ENCODE measurements at regions of chr7 and their contacts with region 1.

Region 1: GRCh38 chr7:24854866-24855265 is 97.6 kb upstream of the GSDME start:
- DNase-seq: no peak
- ATAC-seq: no peak
- H3K4me3 ChIP-seq: no peak overlapping the region
- H3K27ac ChIP-seq: no peak overlapping the region
- H3K4me1 ChIP-seq: no peaks in the 10 kb centered on the region
- H3K27me3 ChIP-seq: no peaks in the 10 kb centered on the region
- CTCF ChIP-seq: no peak

Region 2: DNA sequence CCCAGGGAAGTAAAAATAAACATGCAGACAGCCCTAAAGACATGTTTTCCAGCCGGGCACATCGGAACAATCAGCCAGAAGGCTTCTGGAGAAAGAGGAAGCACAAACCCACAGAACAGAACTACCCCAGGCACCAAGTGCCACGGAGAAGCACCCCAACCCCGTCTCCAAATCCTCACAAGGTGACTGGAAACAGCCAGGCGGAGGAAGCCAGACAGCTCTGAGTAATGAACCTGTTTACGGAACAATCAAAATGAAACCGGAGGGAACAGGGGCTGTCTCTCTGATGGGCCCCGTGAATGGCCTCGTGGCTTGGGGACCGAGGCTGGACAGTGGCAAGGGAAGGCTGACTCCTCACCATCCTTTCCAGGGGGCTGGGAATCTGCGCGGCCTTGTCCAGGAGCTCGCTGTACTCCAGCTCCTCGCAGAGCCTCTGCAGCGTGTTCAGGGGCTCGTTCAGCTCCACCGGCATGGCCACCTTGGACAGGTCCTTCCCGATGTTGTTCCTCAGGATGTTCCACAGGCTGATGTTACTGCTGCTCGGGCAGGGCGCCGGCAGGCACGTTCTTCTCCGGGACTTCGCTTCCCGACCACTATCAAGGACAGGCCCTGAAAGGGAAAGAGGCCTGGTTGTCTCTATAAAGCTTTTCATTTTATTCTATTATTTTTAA is 20.6 kb before region 1 on chr7:
- CTCF ChIA-PET with region 1: no interaction called
- POLR2A ChIA-PET with region 1: no interaction called
- in situ Hi-C with region 1: no loop called
- intact Hi-C with region 1: loop called (anchors 2 kb)
- DNase-seq: no peak
- ATAC-seq: no peak
- H3K4me3 ChIP-seq: no peak overlapping the region
- H3K27ac ChIP-seq: no peak overlapping the region
- H3K4me1 ChIP-seq: no peaks in the 10 kb centered on the region
- H3K27me3 ChIP-seq: no peaks in the 10 kb centered on the region
- CTCF ChIP-seq: no peak